ENCODE measurements at regions of chr3 and their contacts with region 1.

Region 1: GRCh38 chr3:141192345-141192744 is 39.3 kb upstream of the PXYLP1 start:
- DNase-seq: peak; percentile 97

Region 2: DNA sequence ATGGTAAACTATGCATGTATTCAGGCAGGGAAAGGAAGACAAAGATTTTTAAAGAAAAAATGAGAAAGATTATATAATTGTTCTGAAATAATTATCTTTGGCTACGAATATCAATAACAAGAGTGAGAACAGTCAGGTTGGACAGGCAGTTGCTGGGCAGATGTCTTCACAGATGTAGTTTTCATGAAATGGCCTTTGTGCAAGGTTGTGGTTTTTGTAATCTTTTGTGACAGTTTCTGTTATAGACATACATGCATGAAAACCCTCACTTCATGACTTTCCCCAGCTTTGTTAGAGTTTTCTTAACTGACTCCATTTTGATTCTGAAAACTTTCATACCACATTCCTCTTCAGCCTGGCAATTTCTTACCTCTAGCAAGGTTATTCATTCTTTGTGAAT is 285.6 kb before region 1 on chr3:
- intact Hi-C with region 1: loop called (anchors 5 kb)
- DNase-seq: no peak

Region 3: DNA sequence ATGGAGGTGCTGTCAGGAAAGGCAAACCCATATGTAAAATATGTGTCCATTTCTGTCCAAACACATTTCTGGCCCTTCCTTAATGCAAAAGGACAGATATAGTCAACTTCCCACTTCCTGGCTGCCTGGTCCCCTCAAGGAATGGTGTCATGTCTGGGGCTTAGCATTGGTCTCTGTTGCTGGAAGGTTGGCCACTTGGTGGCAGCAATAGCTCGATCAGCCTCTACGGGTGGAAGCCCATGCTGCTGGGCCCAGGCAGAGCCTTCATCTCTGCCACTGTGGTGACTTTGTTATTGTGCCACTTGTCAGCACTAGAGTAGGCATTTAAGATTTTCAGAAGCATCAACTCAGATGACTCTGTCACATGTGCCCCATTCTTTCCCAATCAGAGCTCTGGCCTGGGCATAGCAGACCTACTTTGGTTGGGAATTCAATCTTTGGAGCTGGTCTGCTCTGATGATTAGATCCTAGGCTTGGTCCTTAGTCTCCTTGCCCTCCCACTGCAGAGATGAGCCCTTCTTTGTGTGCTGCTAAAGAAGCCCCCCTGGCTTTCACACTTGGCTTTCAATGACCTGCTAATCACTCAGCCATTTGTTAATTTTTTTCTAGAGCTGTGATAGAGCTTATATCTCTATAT is 192.2 kb before region 1 on chr3:
- intact Hi-C with region 1: loop called (anchors 1 kb)
- DNase-seq: no peak

Region 4: GRCh38 chr3:141011232-141011996 is 180.9 kb before region 1 on chr3:
- intact Hi-C with region 1: loop called (anchors 1 kb)
- DNase-seq: peak; percentile 87

Region 5: DNA sequence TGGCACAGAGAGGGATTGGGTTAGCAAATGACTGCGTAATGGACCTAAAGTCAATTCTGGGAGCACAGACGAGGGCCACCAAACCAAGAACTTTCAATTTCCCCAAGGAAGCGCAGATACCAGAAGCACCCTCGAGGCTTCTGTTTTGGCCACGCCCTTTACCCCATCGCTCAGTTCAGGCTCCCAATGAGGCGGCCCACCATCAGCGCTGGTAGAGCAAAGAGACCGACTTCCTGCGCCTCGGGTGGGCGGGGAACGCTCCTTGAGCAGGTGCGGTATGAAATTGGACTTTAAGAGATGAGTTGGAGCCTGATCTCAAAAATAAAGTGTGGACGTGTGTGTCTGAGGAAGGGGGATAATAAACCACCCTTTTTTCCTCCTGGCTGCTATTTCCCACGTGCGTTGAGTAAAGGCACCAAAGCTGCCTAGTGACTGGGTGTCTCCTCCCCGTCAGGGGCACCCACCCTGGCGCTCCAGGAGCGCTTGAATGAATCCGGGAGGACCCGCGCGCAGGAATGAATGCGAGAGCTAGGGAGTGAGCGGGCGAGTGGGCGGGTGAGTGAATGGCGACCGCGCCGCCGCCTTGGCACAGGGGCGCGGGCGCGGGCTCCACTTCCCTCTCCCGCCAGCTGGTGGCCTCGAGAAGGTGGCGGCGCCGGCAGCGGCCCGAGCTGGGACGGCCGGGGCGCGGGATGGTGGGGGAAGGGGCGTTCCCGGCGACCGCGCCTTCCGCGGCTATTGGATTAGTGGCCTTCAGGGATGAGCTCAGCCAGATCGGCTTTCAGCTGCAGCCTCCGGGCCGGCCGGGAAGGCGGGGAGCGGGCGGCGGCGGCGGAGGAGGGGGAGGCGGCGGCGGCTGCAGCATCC is 141.5 kb before region 1 on chr3 and contains the start of gene SPSB4:
- intact Hi-C with region 1: loop called (anchors 2 kb)
- DNase-seq: peak; percentile 84
- total RNA-seq, gene SPSB4: 4.9 TPM

Region 6: DNA sequence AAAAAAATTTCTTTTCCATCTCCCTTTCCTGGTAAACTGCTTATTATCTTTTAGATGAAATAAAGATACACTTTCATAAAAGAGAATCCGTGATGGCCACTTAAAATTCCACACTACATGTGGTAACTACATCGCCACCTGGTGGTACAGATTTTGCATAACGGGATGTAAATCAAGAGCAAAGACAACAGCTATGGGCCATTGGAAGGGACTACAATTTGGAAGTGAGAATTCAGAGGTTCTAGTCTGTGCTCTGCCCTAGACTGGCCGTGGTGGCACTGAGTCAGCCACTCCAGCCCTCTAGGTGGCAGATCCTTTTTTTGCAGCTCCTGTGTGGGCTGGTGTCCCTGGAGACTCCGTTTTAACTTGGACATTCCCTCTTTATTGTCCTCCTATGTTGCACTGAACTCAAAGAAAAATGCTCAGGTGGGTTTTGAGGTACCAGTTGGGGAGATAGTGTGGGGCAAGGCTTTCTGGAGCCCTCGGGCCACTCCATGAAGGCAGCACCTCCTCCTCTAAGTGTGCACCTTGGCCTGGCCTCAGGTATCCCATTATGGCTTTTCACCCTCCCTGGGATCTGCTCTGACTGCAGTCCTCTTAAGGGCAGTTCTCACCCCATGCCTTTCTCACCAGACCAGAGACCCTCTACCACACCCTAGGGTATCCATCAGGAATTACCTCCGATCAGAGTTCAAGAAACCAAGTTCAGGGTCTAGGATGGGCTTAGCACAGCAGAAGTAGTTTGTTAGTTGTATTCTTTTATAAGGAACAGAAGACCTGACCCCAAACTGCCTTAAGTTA is 86.3 kb before region 1 on chr3:
- intact Hi-C with region 1: loop called (anchors 5 kb)
- DNase-seq: peak; percentile 55

Region 7: GRCh38 chr3:141266797-141267555 is 74.6 kb after region 1 on chr3:
- intact Hi-C with region 1: no loop called
- DNase-seq: no peak

Region 8: GRCh38 chr3:141485641-141486495 is 293.5 kb after region 1 on chr3:
- intact Hi-C with region 1: no loop called
- DNase-seq: no peak

Measured in cardiac septum (tissue), 1 donor.